Colonic mucosa (tissue), 4 donors: ENCODE measurements at regions of chr1 and their contacts with region 1.

Region 1: GRCh38 chr1:246689409-246690008 is 34.7 kb upstream of the SCCPDH start:
- DNase-seq: peak; percentile 91
- H3K4me3 ChIP-seq: peak overlapping the region; percentile 34
- H3K27ac ChIP-seq: no peak overlapping the region
- H3K4me1 ChIP-seq: no peaks in the 10 kb centered on the region
- H3K27me3 ChIP-seq: no peaks in the 10 kb centered on the region
- CTCF ChIP-seq: peak; percentile 79

Region 2: DNA sequence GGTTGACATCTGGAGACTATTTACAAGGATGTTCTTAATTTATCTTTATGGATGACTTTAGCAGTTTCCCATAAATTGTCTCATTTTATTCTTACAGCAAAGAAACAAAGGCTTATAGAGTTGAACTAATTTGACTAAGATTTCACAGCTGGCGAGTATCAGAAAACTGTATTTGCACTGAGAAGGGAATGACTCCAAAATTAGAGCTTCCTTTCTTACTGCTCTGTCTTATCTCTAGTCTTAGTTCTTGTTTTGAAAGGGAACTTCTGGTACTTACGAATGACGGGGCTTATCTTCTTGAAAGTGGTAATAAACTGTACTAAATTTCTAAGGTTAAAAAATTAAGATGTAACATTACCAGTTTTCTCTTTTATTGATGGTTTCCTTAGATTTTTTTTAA is 109.7 kb before region 1 on chr1:
- intact Hi-C with region 1: no loop called
- DNase-seq: no peak
- H3K4me3 ChIP-seq: no peak overlapping the region
- H3K27ac ChIP-seq: no peak overlapping the region
- H3K4me1 ChIP-seq: peaks cover 11% of the 10 kb centered on the region
- H3K27me3 ChIP-seq: no peaks in the 10 kb centered on the region
- CTCF ChIP-seq: no peak

Region 3: DNA sequence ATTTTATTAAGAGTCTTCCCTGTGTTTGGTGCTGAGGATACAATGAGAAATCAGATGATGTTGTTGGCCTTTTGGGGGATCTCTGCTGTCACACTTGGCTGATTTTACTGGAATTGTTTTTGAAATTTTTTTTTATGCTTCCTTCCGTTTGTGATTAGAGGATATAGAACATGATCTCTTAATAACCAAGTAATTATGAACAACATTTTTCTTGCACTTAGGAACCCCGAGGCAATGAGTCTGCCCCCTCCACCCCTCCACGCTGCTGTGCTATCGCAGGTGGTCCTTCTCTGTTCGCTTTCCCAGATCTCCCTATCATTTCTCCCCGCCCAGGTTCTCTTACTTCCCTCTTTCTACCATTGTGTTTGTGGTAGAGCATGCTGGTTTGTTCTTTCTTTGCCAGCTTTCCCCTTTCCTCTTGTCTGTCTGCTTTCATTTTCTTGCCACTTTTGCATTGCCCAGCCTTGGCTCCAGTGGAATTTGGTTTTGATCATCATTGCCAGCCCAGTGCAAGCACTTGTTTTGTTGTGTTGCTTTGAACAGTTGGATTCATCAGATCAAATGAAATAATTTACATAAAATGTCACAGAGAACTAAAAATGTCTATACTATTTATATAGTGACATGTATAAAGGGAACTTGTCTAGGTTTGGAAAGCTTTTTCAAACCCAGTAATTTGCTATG is 38.4 kb before region 1 on chr1:
- intact Hi-C with region 1: no loop called
- DNase-seq: no peak
- H3K4me3 ChIP-seq: no peak overlapping the region
- H3K27ac ChIP-seq: no peak overlapping the region
- H3K4me1 ChIP-seq: peaks cover 3% of the 10 kb centered on the region
- H3K27me3 ChIP-seq: no peaks in the 10 kb centered on the region
- CTCF ChIP-seq: no peak

Region 4: DNA sequence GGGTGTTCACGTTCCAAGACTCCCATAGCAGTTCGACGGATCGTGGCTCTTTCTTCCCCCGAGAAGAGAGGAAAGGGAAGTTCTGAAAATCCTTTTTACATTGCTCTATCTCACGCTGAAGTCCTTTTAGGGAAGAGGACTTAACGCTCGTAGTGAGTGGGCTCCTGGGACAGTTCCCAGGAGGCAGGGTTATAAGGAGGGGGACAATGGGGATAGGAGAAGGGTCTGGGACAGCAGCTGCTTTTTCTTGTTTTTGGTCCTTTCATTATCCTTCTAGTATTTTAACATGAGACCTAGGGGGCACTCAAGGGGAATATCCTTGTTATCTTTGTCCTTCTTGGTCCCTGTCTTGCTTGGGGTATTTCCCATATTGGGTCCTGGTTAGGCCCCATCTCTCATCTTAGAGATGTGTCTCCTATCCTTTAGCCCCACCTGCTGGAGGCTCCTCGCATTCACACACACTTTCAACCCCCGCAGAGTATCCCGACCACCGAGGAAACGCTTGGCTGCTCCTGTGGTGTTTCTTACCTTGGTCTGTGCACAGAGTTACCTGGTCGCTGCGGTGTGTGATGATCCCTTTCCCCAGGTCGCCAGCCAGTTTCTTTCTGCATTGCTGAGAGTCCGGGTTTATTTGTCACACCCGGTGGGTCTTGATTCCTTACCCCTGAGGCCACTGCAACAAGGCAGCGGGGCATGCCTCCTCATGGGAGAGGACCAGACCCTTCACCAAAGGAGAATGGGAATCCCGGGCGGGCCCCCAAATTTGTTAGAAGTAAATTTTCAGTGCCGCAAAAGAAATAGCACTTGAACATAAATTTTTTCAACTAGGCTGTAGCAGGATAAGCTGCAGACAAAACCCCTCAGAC is 64.4 kb after region 1 on chr1:
- intact Hi-C with region 1: loop called (anchors 5 kb)
- DNase-seq: peak; percentile 73
- H3K4me3 ChIP-seq: no peak overlapping the region
- H3K27ac ChIP-seq: no peak overlapping the region
- H3K4me1 ChIP-seq: no peaks in the 10 kb centered on the region
- H3K27me3 ChIP-seq: no peaks in the 10 kb centered on the region
- CTCF ChIP-seq: peak; percentile 84